ENCODE measurements at regions of chr4 and their contacts with region 1.

Region 1: DNA sequence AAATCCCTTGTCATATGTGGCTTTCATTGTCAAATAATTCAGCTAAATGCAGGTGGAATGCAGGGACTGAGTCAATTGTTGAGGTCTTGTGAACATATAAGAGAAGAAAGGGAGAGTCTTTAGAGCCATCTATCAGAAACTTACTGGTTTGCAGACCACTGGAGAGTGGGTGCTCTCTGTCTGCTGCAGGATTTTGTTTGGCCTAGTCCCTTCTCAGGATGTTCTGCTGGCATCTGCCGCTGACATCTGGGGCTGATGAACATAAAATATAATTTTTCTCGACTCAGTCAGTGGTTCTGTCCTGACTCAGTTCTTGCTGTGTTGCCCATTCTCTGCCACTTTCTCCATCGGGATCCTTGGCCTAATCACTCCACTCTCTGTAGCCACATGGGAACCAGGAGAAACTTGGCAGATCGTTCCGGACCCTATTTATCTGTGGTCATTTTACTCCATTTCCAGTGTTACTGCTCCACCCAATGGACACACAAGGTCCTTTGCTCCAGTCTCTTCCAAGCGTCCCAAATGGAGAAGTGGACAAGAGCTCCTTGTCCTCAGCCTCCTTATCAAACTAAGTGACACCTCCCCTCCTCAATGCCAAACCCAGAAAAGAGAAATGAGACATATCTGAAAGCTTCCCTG is 436.2 kb downstream of the FAT4 start:
- DNase-seq: peak; percentile 80
- H3K4me3 ChIP-seq: no peak overlapping the region
- H3K27ac ChIP-seq: no peak overlapping the region
- H3K4me1 ChIP-seq: no peaks in the 10 kb centered on the region
- H3K27me3 ChIP-seq: no peaks in the 10 kb centered on the region
- CTCF ChIP-seq: peak; percentile 43 to 65
- POLR2A ChIP-seq: no peak

Region 2: GRCh38 chr4:125283707-125284279 is 467.2 kb before region 1 on chr4:
- CTCF ChIA-PET with region 1: interaction called, 11 read pairs
- POLR2A ChIA-PET with region 1: no interaction called
- dilution Hi-C with region 1: no loop called
- intact Hi-C with region 1: no loop called
- DNase-seq: peak; percentile 54
- H3K4me3 ChIP-seq: no peak overlapping the region
- H3K27ac ChIP-seq: no peak overlapping the region
- H3K4me1 ChIP-seq: peaks cover 4% of the 10 kb centered on the region
- H3K27me3 ChIP-seq: no peaks in the 10 kb centered on the region
- CTCF ChIP-seq: peak; percentile 8 to 26
- POLR2A ChIP-seq: no peak

Region 3: GRCh38 chr4:125323654-125324053 is 427.3 kb before region 1 on chr4:
- CTCF ChIA-PET with region 1: interaction called, 215 read pairs
- POLR2A ChIA-PET with region 1: no interaction called
- dilution Hi-C with region 1: no loop called
- intact Hi-C with region 1: no loop called
- DNase-seq: peak; percentile 88
- H3K4me3 ChIP-seq: peak overlapping the region in 2 of 3 experiments; percentile 5 to 46
- H3K27ac ChIP-seq: peak overlapping the region; percentile 56
- H3K4me1 ChIP-seq: peaks cover 56% of the 10 kb centered on the region
- H3K27me3 ChIP-seq: no peaks in the 10 kb centered on the region
- CTCF ChIP-seq: no peak
- POLR2A ChIP-seq: no peak

Region 4: GRCh38 chr4:125780164-125780563 is 29.2 kb after region 1 on chr4:
- CTCF ChIA-PET with region 1: no interaction called
- POLR2A ChIA-PET with region 1: no interaction called
- dilution Hi-C with region 1: no loop called
- intact Hi-C with region 1: no loop called
- DNase-seq: no peak
- H3K4me3 ChIP-seq: no peak overlapping the region
- H3K27ac ChIP-seq: no peak overlapping the region
- H3K4me1 ChIP-seq: no peaks in the 10 kb centered on the region
- H3K27me3 ChIP-seq: no peaks in the 10 kb centered on the region
- CTCF ChIP-seq: no peak
- POLR2A ChIP-seq: no peak

Region 5: DNA sequence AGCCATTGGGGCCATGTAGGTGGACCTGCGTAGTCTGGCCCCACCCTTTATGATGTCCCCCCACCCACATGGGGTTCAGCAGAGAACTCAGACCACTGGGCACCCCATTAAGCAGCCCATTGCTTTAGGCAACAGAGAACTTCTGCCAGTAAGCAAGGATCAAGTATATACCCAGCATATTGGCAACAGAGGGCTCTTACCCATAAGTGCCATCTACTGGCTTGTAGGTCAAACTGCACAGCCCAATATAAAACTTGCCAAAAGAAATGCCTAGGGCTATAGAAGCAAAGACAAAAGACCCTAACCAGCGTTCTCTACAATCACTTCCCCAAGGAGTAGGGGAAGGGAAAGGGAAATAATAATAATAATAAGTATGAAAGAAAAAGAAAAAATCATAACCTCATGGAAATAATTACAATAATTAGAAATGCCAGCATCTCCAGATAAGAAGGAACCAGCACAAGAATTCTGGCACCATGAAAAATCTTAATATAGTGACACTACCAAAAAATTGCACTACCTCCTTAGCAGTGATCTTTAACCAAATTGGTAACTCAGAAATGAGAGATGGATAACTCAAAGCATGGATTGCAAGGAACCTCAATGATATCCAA is 654.5 kb after region 1 on chr4:
- CTCF ChIA-PET with region 1: no interaction called
- POLR2A ChIA-PET with region 1: no interaction called
- dilution Hi-C with region 1: no loop called
- intact Hi-C with region 1: loop called (anchors 10 kb)
- DNase-seq: peak; percentile 26
- H3K4me3 ChIP-seq: no peak overlapping the region
- H3K27ac ChIP-seq: no peak overlapping the region
- H3K4me1 ChIP-seq: no peaks in the 10 kb centered on the region
- H3K27me3 ChIP-seq: no peaks in the 10 kb centered on the region
- CTCF ChIP-seq: peak; percentile 32 to 60
- POLR2A ChIP-seq: no peak

Region 6: DNA sequence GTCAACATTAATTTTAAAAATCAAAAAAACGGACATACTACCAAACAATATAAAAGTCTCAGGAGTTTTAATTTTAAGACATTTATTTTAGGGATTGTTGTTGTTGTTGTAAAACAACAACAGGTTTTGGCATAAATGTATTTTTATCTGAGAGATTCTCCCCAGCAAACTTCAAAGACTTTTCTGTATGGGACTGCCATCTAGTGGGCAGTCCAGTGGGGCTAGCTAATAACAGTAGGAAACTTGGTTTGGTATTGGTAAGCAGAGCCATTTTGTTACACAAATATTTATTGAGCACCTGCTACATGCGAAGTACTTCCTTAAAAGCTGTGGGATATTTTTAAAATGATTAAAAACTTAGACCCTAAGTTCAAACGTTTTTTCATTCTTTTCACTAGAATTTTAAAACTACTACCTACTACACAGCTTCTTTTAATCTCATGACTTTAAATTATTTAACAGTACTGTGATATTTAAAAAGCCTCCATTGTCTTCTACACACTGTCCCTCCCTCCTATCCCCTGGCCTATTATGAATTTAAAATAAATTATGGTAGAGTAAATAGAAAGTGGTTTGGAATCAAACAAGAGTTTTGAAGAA is 853.4 kb after region 1 on chr4:
- CTCF ChIA-PET with region 1: interaction called, 10 read pairs
- POLR2A ChIA-PET with region 1: no interaction called
- dilution Hi-C with region 1: no loop called
- intact Hi-C with region 1: loop called (anchors 10 kb)
- DNase-seq: peak; percentile 39
- H3K4me3 ChIP-seq: no peak overlapping the region
- H3K27ac ChIP-seq: no peak overlapping the region
- H3K4me1 ChIP-seq: no peaks in the 10 kb centered on the region
- H3K27me3 ChIP-seq: no peaks in the 10 kb centered on the region
- CTCF ChIP-seq: peak; percentile 48 to 65
- POLR2A ChIP-seq: no peak

Measured in endothelial cell of umbilical vein (primary cell).